Left ventricle myocardium inferior (tissue), 1 donor: ENCODE measurements at regions of chr3 and their contacts with region 1.

Region 1: DNA sequence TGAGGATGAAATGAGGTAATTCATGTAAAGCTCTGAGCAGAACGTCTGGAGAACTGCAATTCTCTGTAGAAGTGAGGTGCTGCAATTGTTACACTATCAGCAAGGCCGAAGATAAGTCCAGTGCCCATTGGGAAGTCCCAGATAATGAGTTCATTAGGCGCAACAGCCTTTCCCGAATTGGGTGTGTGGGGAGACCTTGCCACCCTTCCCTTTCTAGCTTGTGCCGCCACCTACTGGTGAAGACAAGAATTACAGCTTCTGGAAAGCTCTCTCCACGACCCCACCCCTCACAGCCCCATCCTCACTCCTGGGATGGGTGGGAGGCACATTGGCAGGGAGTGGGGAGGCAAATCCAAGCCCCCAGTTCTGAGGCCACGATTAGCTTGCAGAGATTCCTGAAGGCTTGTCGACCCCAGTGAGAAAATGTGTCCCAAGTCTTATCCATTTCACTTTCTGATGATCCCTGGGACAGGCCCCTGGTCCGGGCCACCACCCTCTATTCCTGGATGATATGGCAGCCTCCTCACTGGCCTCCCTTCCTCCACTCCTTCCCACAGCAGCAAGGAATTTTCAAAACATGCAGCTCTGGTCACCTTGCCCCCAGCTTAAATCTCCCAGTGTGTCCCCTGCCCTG is 36.4 kb downstream of the FAM3D start:
- DNase-seq: peak; percentile 42
- H3K4me3 ChIP-seq: no peak overlapping the region
- H3K27ac ChIP-seq: peak overlapping the region; percentile 92
- H3K4me1 ChIP-seq: peaks cover 40% of the 10 kb centered on the region
- H3K27me3 ChIP-seq: peaks cover 14% of the 10 kb centered on the region
- CTCF ChIP-seq: peak; percentile 97

Region 2: GRCh38 chr3:58317811-58318210 is 312.4 kb before region 1 on chr3:
- intact Hi-C with region 1: loop called (anchors 10 kb)
- DNase-seq: no peak
- H3K4me3 ChIP-seq: no peak overlapping the region
- H3K27ac ChIP-seq: no peak overlapping the region
- H3K4me1 ChIP-seq: peaks cover 29% of the 10 kb centered on the region
- H3K27me3 ChIP-seq: no peaks in the 10 kb centered on the region
- CTCF ChIP-seq: no peak

Region 3: DNA sequence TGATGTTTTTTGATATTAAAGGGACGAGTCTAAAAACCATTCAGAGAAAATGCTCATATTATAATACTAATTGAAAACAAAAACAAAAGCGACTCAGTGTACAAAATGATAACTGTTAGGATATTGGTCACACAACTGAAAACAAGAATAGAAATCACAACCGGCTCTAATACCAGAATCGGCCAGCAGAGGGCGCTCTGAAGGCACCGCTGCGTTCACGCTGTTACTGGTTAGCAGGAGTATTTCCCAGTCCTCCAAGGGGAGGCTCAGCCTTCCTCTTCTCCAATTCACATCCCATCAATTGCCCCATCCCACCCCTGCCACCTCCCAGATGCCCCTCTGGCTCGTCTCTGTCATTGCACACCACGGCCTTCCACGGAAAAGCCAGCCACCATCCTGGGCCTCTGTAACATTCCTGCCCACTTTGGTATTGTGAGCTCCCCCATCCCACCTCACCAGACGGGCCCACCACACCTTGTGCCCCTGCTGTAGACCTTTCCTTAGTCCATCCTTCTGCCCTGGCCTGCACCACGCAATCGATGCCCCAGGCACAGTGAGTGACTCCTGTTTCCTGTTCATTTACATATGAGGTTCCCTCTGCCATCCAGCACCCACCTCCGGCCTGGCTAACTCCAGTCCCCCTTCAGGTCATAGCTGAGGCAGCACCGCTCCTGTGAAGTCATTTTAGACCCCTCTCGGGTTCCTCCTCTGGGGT is 61.5 kb before region 1 on chr3:
- intact Hi-C with region 1: loop called (anchors 2 kb)
- DNase-seq: peak; percentile 80
- H3K4me3 ChIP-seq: peak overlapping the region; percentile 24
- H3K27ac ChIP-seq: peak overlapping the region; percentile 28
- H3K4me1 ChIP-seq: peaks cover 76% of the 10 kb centered on the region
- H3K27me3 ChIP-seq: no peaks in the 10 kb centered on the region
- CTCF ChIP-seq: peak; percentile 97